MCF 10A (cell line): ENCODE measurements at regions of chr7 and their contacts with region 1.

Region 1: GRCh38 chr7:33757562-33758165 is 147.7 kb upstream of the BMPER start:
- DNase-seq: peak; percentile 61
- H3K4me3 Mint-ChIP-seq: no peak overlapping the region
- H3K27ac Mint-ChIP-seq: no peak overlapping the region
- H3K4me1 Mint-ChIP-seq: no peaks in the 10 kb centered on the region
- H3K27me3 Mint-ChIP-seq: no peaks in the 10 kb centered on the region
- CTCF ChIP-seq: peak; percentile 55

Region 2: GRCh38 chr7:33243319-33243881 is 514.3 kb before region 1 on chr7:
- CTCF ChIA-PET with region 1: interaction called, 4 read pairs
- POLR2A ChIA-PET with region 1: no interaction called
- intact Hi-C with region 1: loop called (anchors 1 kb)
- DNase-seq: peak; percentile 57
- H3K4me3 Mint-ChIP-seq: no peak overlapping the region
- H3K27ac Mint-ChIP-seq: no peak overlapping the region
- H3K4me1 Mint-ChIP-seq: no peaks in the 10 kb centered on the region
- H3K27me3 Mint-ChIP-seq: no peaks in the 10 kb centered on the region
- CTCF ChIP-seq: peak; percentile 58

Region 3: GRCh38 chr7:33511778-33512177 is 245.9 kb before region 1 on chr7:
- CTCF ChIA-PET with region 1: no interaction called
- POLR2A ChIA-PET with region 1: no interaction called
- intact Hi-C with region 1: no loop called
- DNase-seq: no peak
- H3K4me3 Mint-ChIP-seq: no peak overlapping the region
- H3K27ac Mint-ChIP-seq: no peak overlapping the region
- H3K4me1 Mint-ChIP-seq: no peaks in the 10 kb centered on the region
- H3K27me3 Mint-ChIP-seq: no peaks in the 10 kb centered on the region
- CTCF ChIP-seq: no peak

Region 4: DNA sequence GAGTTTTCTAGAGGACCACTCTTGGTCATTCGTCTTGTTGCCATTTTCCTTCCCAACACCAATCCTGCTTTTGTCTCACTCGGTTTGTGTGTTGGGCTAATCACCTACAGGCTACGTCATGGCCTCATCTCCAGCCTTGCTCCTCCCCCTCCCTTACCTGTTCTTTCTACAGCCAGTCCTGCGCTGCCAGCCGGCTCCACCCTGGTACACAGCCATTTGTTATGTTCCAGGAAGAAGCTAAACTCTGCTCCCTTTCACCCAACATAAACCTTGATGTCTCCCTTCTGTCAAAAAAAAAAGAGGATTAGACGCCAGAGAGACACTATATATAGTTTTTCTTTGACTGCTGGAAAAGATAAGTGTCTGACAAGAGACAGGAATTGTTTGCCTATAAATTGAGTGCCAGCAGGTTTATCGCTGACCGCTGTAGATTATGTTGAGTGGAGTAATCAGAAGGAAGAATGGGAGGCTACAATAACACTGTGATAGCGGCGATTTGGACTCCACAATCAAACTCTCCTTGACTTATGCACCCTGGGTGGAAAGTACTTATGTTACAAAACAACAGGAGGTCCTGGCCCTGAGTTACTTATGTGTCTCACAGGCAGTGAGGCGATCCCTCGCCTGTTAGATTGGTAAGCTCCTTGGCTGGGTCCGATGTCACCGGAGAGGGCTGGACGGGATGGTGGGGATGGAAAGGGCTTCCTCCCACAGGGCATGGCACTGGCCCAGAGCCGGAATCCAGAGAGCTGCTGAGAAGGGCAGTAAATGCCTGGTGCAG is 23.6 kb before region 1 on chr7:
- CTCF ChIA-PET with region 1: no interaction called
- POLR2A ChIA-PET with region 1: no interaction called
- intact Hi-C with region 1: no loop called
- DNase-seq: no peak
- H3K4me3 Mint-ChIP-seq: no peak overlapping the region
- H3K27ac Mint-ChIP-seq: no peak overlapping the region
- H3K4me1 Mint-ChIP-seq: no peaks in the 10 kb centered on the region
- H3K27me3 Mint-ChIP-seq: no peaks in the 10 kb centered on the region
- CTCF ChIP-seq: no peak

Region 5: DNA sequence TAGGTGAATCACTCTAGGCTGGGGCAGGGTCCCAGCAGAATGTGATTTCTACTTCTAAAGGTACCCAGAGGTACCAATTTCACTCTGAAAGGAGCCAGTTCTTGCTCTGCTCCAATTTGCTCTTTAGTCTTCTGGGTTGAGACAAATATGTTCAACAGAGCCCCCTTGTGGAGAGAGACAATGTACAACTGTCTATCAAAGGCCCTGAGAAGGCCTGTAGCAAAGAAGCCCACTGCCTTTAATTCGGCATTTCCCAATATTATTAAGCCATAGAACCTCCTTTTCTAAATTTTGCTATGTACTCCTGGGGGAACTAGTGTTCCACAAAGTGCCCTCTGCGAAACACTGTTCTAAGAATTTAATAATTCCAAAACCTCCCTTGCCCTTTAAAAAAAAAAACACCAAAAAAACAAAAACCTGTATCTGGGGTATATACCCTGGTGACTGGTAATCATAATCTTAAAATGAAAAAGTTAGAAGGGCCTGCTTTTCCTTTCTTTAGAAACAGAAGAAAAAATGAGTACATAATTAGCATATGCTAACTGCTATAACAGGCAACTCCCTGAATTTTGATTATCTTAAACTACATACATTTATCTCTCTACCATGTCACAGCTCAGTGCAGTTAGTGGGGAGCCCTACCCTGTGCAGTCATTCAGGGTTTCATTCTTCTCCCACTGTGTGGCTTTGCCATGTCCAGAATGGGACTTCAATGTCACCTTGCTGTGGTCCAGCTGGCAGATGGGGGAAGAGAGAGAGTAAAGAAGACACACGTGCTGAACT is 13.2 kb before region 1 on chr7:
- CTCF ChIA-PET with region 1: interaction called, 18 read pairs
- POLR2A ChIA-PET with region 1: interaction called, 4 read pairs
- intact Hi-C with region 1: no loop called
- DNase-seq: peak; percentile 71
- H3K4me3 Mint-ChIP-seq: no peak overlapping the region
- H3K27ac Mint-ChIP-seq: peak overlapping the region; percentile 90
- H3K4me1 Mint-ChIP-seq: peaks cover 23% of the 10 kb centered on the region
- H3K27me3 Mint-ChIP-seq: no peaks in the 10 kb centered on the region
- CTCF ChIP-seq: peak; percentile 27

Region 6: GRCh38 chr7:33774762-33775523 is 17.3 kb after region 1 on chr7:
- CTCF ChIA-PET with region 1: interaction called, 15 read pairs
- POLR2A ChIA-PET with region 1: interaction called, 3 read pairs
- intact Hi-C with region 1: no loop called
- DNase-seq: peak; percentile 92
- H3K4me3 Mint-ChIP-seq: no peak overlapping the region
- H3K27ac Mint-ChIP-seq: peak overlapping the region; percentile 78
- H3K4me1 Mint-ChIP-seq: peaks cover 20% of the 10 kb centered on the region
- H3K27me3 Mint-ChIP-seq: no peaks in the 10 kb centered on the region
- CTCF ChIP-seq: no peak

Region 7: GRCh38 chr7:33921216-33921938 is 163.7 kb after region 1 on chr7:
- CTCF ChIA-PET with region 1: interaction called, 177 read pairs
- POLR2A ChIA-PET with region 1: no interaction called
- intact Hi-C with region 1: no loop called
- DNase-seq: no peak
- H3K4me3 Mint-ChIP-seq: no peak overlapping the region
- H3K27ac Mint-ChIP-seq: no peak overlapping the region
- H3K4me1 Mint-ChIP-seq: no peaks in the 10 kb centered on the region
- H3K27me3 Mint-ChIP-seq: peaks cover 20% of the 10 kb centered on the region
- CTCF ChIP-seq: no peak